MCF 10A (cell line): ENCODE measurements at regions of chr3 and their contacts with region 1.

Region 1: DNA sequence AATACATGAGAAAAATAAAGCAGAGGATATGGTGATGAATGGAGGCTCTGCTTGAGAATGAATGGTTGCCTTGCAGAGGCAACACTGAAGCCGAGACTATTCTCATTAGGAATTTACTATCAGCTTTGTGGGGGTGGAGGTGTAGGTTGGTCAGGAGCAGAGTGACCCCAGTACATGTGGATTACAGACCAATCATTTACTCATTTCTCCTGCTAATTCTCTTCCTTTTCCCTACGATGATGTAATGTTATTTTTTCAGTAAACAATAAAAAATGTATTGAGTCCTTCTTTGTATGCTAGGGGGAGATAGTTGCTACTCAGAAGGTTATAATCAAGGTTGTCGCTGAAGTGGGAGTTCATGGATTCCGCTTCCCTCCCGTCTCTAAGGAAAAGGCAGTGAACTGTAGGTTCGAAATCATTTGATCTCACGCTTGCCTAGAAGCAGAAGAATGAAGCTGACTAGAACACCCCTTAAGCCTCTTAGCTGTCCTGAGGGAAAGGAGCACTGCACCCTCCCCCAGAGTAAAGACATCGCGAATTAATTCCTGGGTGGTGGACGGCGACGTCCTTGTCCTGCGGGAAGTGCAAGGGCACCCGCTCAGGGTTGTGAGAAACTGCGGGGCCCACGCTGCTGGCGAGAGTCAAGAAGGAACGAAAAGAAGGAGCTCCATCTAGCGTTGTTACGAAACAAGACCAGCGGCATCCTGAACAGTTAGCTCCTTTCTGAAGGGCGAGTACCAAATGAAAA is 213.2 kb upstream of the PFN2 start:
- DNase-seq: peak; percentile 84
- H3K4me3 Mint-ChIP-seq: no peak overlapping the region
- H3K27ac Mint-ChIP-seq: no peak overlapping the region
- H3K4me1 Mint-ChIP-seq: peaks cover 7% of the 10 kb centered on the region
- H3K27me3 Mint-ChIP-seq: no peaks in the 10 kb centered on the region
- CTCF ChIP-seq: peak; percentile 70

Region 2: GRCh38 chr3:149765762-149766334 is 418.0 kb before region 1 on chr3:
- CTCF ChIA-PET with region 1: interaction called, 4 read pairs
- POLR2A ChIA-PET with region 1: no interaction called
- intact Hi-C with region 1: loop called (anchors 5 kb)
- DNase-seq: peak; percentile 34
- H3K4me3 Mint-ChIP-seq: no peak overlapping the region
- H3K27ac Mint-ChIP-seq: no peak overlapping the region
- H3K4me1 Mint-ChIP-seq: no peaks in the 10 kb centered on the region
- H3K27me3 Mint-ChIP-seq: no peaks in the 10 kb centered on the region
- CTCF ChIP-seq: peak; percentile 49

Region 3: DNA sequence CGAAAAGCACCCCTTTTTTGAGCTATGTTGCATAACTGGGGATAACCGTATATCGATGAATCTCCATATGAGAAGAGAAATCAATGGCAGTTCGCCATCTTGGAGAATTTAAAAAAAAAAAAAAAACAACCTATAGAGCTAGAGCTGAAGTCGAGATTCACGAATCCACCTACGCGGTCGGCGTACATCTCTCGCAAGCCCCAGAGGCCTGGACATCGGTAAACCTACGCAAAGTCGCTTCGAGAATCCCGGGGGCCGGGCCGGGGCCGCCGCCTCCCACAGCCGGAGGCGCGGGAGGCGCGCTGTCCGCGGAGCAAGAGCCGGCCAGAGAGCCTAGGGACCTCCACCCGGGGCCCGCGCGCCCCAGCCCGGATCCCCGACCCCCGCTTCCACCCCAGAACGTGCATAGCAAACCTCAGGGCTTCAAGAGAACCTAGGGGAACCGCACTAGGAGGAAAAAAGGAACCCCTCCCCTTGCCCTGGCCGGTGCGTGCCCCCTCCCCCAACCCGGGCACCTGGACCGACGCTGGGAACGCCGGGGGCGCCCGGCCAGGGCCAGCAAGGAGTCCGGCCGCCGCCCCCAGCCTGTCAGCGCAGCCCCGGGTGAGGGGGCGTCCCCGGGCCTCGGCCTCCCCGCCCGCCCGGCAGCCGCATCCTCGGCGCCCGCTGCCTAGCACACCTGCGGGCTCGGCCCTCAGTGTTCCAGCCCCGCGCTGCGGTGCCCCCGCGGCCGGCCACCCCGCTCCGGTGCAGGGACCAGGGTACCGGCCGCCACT is 213.7 kb before region 1 on chr3:
- CTCF ChIA-PET with region 1: interaction called, 110 read pairs
- POLR2A ChIA-PET with region 1: interaction called, 119 read pairs
- intact Hi-C with region 1: loop called (anchors 1 kb)
- DNase-seq: peak; percentile 80
- H3K4me3 Mint-ChIP-seq: peak overlapping the region; percentile 80
- H3K27ac Mint-ChIP-seq: peak overlapping the region; percentile 84
- H3K4me1 Mint-ChIP-seq: peaks cover 28% of the 10 kb centered on the region
- H3K27me3 Mint-ChIP-seq: no peaks in the 10 kb centered on the region
- CTCF ChIP-seq: no peak

Region 4: GRCh38 chr3:150094150-150094925 is 89.5 kb before region 1 on chr3:
- CTCF ChIA-PET with region 1: interaction called, 10 read pairs
- POLR2A ChIA-PET with region 1: no interaction called
- intact Hi-C with region 1: no loop called
- DNase-seq: peak; percentile 86
- H3K4me3 Mint-ChIP-seq: no peak overlapping the region
- H3K27ac Mint-ChIP-seq: peak overlapping the region; percentile 12
- H3K4me1 Mint-ChIP-seq: peaks cover 22% of the 10 kb centered on the region
- H3K27me3 Mint-ChIP-seq: no peaks in the 10 kb centered on the region
- CTCF ChIP-seq: no peak